IMR-90 (cell line): ENCODE measurements at regions of chr16 and their contacts with region 1.

Region 1: GRCh38 chr16:24580665-24581064 is 41.3 kb downstream of the RBBP6 start:
- DNase-seq: peak; percentile 62
- ATAC-seq: peak; percentile 48
- H3K4me3 ChIP-seq: no peak overlapping the region
- H3K27ac ChIP-seq: no peak overlapping the region
- H3K4me1 ChIP-seq: peaks cover 3% of the 10 kb centered on the region; the same call in 1 of the 2 replicates
- H3K27me3 ChIP-seq: no peaks in the 10 kb centered on the region
- CTCF ChIP-seq: peak; percentile 71
- POLR2A ChIP-seq: no peak
- RAD21 ChIP-seq: peak; percentile 75

Region 2: DNA sequence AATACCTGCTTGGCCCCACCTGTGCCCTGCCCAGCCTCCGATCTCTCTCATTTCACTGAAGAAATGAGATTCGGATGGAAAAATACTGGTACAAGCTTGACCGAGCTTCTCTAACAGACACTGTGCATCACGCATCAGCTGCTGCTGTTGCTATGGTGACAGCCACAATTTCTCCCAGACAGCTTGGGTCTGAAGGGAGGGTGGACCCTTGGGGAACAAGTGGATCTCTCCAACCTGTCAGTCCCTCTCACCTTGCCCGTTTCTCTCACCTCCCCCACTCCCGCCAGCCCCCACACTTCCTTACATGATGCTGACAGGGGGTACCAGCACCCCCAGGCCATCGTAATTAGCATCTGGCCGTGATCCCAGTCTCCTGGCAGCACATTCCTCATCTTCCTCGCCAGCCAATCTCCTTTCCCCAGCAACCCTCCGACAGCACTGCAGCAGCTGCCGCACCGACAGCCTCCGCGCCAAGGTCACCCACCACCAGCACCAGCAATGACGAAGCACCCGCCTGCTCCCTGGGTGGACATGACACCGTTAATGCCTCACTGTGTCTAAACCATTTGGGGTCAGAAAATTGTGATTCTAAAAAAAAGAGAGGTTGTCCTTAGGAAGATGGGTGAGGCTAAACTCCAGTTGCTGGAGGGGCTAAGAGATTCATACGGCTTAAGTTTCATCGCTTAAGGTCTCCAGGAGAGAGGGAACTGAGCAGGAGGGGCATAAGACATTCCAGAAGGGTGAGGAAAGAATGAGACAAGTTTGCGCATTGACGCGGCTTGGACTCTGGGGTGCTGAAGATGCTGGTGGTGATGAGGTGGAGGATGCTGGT is 90.2 kb after region 1 on chr16:
- CTCF ChIA-PET with region 1: no interaction called
- POLR2A ChIA-PET with region 1: no interaction called
- dilution Hi-C with region 1: no loop called
- in situ Hi-C with region 1: no loop called
- intact Hi-C with region 1: loop called (anchors 5 kb)
- DNase-seq: peak; percentile 92
- ATAC-seq: peak; percentile 76
- H3K4me3 ChIP-seq: no peak overlapping the region
- H3K27ac ChIP-seq: peak overlapping the region; percentile 3
- H3K4me1 ChIP-seq: peaks cover 9% of the 10 kb centered on the region
- H3K27me3 ChIP-seq: no peaks in the 10 kb centered on the region
- CTCF ChIP-seq: no peak
- POLR2A ChIP-seq: 0 out of 2 replicates have a peak, but pooled peaks have one; percentile 49
- RAD21 ChIP-seq: no peak

Region 3: GRCh38 chr16:24689145-24689544 is 108.5 kb after region 1 on chr16:
- CTCF ChIA-PET with region 1: interaction called, 3 read pairs
- POLR2A ChIA-PET with region 1: no interaction called
- dilution Hi-C with region 1: no loop called
- in situ Hi-C with region 1: no loop called
- intact Hi-C with region 1: loop called (anchors 1 kb)
- DNase-seq: peak; percentile 48
- ATAC-seq: peak; percentile 45; the same call in 1 of the 2 replicates
- H3K4me3 ChIP-seq: no peak overlapping the region
- H3K27ac ChIP-seq: no peak overlapping the region
- H3K4me1 ChIP-seq: peaks cover 13% of the 10 kb centered on the region
- H3K27me3 ChIP-seq: no peaks in the 10 kb centered on the region
- CTCF ChIP-seq: peak; percentile 51
- POLR2A ChIP-seq: no peak
- RAD21 ChIP-seq: peak; percentile 55

Region 4: GRCh38 chr16:24729362-24729984 is 148.8 kb after region 1 on chr16 and contains the start of gene TNRC6A:
- CTCF ChIA-PET with region 1: interaction called, 10 read pairs
- POLR2A ChIA-PET with region 1: interaction called, 4 read pairs
- dilution Hi-C with region 1: no loop called
- in situ Hi-C with region 1: no loop called
- intact Hi-C with region 1: no loop called
- DNase-seq: peak; percentile 86
- ATAC-seq: peak; percentile 90
- H3K4me3 ChIP-seq: peak within 1 kb of the TSS; percentile 96
- H3K27ac ChIP-seq: peak within 1 kb of the TSS; percentile 97
- H3K4me1 ChIP-seq: peaks cover 10% of the 10 kb centered on the region
- H3K27me3 ChIP-seq: no peaks in the 10 kb centered on the region
- CTCF ChIP-seq: no peak
- POLR2A ChIP-seq: peak; percentile 74
- RAD21 ChIP-seq: no peak; the same call in 1 of the 2 replicates
- total RNA-seq, gene TNRC6A: 32.4 and 36.9 TPM in 2 replicates

Region 5: GRCh38 chr16:24737391-24737871 is 156.8 kb after region 1 on chr16:
- CTCF ChIA-PET with region 1: interaction called, 10 read pairs
- POLR2A ChIA-PET with region 1: no interaction called
- dilution Hi-C with region 1: no loop called
- in situ Hi-C with region 1: no loop called
- intact Hi-C with region 1: loop called (anchors 2 kb)
- DNase-seq: peak; percentile 70
- ATAC-seq: peak; percentile 78
- H3K4me3 ChIP-seq: no peak overlapping the region
- H3K27ac ChIP-seq: peak overlapping the region; percentile 93; the same call in 1 of the 2 replicates
- H3K4me1 ChIP-seq: peaks cover 27% of the 10 kb centered on the region
- H3K27me3 ChIP-seq: no peaks in the 10 kb centered on the region
- CTCF ChIP-seq: no peak
- POLR2A ChIP-seq: no peak
- RAD21 ChIP-seq: no peak

Region 6: GRCh38 chr16:24771132-24771778 is 190.6 kb after region 1 on chr16:
- CTCF ChIA-PET with region 1: interaction called, 5 read pairs
- POLR2A ChIA-PET with region 1: no interaction called
- dilution Hi-C with region 1: no loop called
- in situ Hi-C with region 1: no loop called
- intact Hi-C with region 1: loop called (anchors 5 kb)
- DNase-seq: peak; percentile 75
- ATAC-seq: peak; percentile 88
- H3K4me3 ChIP-seq: no peak overlapping the region
- H3K27ac ChIP-seq: peak overlapping the region; percentile 19; the same call in 1 of the 2 replicates
- H3K4me1 ChIP-seq: peaks cover 8% of the 10 kb centered on the region
- H3K27me3 ChIP-seq: no peaks in the 10 kb centered on the region
- CTCF ChIP-seq: no peak
- POLR2A ChIP-seq: no peak
- RAD21 ChIP-seq: no peak

Region 7: GRCh38 chr16:24800586-24800985 is 219.9 kb after region 1 on chr16:
- CTCF ChIA-PET with region 1: interaction called, 11 read pairs
- POLR2A ChIA-PET with region 1: no interaction called
- dilution Hi-C with region 1: no loop called
- in situ Hi-C with region 1: no loop called
- intact Hi-C with region 1: loop called (anchors 2 kb)
- DNase-seq: peak; percentile 65
- ATAC-seq: peak; percentile 53
- H3K4me3 ChIP-seq: no peak overlapping the region
- H3K27ac ChIP-seq: no peak overlapping the region
- H3K4me1 ChIP-seq: peaks cover 4% of the 10 kb centered on the region; the same call in 1 of the 2 replicates
- H3K27me3 ChIP-seq: no peaks in the 10 kb centered on the region
- CTCF ChIP-seq: peak; percentile 23
- POLR2A ChIP-seq: no peak
- RAD21 ChIP-seq: no peak; the same call in 1 of the 2 replicates